HepG2 (cell line): ENCODE measurements at regions of chr2 and their contacts with region 1.

Region 1: GRCh38 chr2:240913810-240914644 is 7.9 kb downstream of the CROCC2 start:
- DNase-seq: peak; percentile 43
- ATAC-seq: peak; percentile 75
- H3K4me3 ChIP-seq: peak overlapping the region in 2 of 3 experiments; percentile 25 to 68; a peak in 3 of 6 replicates
- H3K27ac ChIP-seq: no peak overlapping the region
- H3K4me1 ChIP-seq: peaks cover 40% of the 10 kb centered on the region
- H3K27me3 ChIP-seq: peaks cover 8 to 74% of the 10 kb centered on the region in 2 experiments; a peak in 4 of 5 replicates
- CTCF ChIP-seq: peak; percentile 98
- EP300 ChIP-seq: no peak
- POLR2A ChIP-seq: no peak
- RAD21 ChIP-seq: peak; percentile 90

Region 2: GRCh38 chr2:240965296-240965904 is 51.4 kb after region 1 on chr2:
- CTCF ChIA-PET with region 1: no interaction called
- POLR2A ChIA-PET with region 1: interaction called, 10 read pairs
- in situ Hi-C with region 1: no loop called
- intact Hi-C with region 1: loop called (anchors 2 kb)
- DNase-seq: no peak
- ATAC-seq: no peak
- H3K4me3 ChIP-seq: peak overlapping the region in 2 of 3 experiments; percentile 56 to 85; a peak in 4 of 6 replicates
- H3K27ac ChIP-seq: peak overlapping the region; percentile 2
- H3K4me1 ChIP-seq: peaks cover 92% of the 10 kb centered on the region
- H3K27me3 ChIP-seq: peaks cover 2 to 3% of the 10 kb centered on the region in 2 experiments; a peak in 3 of 5 replicates
- CTCF ChIP-seq: no peak
- EP300 ChIP-seq: no peak
- POLR2A ChIP-seq: no peak
- RAD21 ChIP-seq: no peak

Region 3: GRCh38 chr2:240991373-240992263 is 77.6 kb after region 1 on chr2:
- CTCF ChIA-PET with region 1: interaction called, 20 read pairs
- POLR2A ChIA-PET with region 1: interaction called, 3 read pairs
- in situ Hi-C with region 1: loop called (anchors 5 kb)
- intact Hi-C with region 1: loop called (anchors 1 kb)
- DNase-seq: peak; percentile 58
- ATAC-seq: peak; percentile 6; the same call in 2 of the 3 replicates
- H3K4me3 ChIP-seq: peak overlapping the region in 1 of 3 experiments; percentile 19; a peak in 1 of 6 replicates
- H3K27ac ChIP-seq: no peak overlapping the region
- H3K4me1 ChIP-seq: peaks cover 47% of the 10 kb centered on the region
- H3K27me3 ChIP-seq: peaks cover 39 to 95% of the 10 kb centered on the region in 2 experiments
- CTCF ChIP-seq: no peak
- EP300 ChIP-seq: no peak
- POLR2A ChIP-seq: no peak
- RAD21 ChIP-seq: no peak